ENCODE measurements at regions of chr6 and their contacts with region 1.

Region 1: GRCh38 chr6:41182069-41183034 is 18.6 kb downstream of the TREML2 start:
- DNase-seq: peak in 8 of 9 experiments; percentile 28 to 78 (median 53)
- ATAC-seq: peak; percentile 93
- H3K4me3 ChIP-seq: no peak overlapping the region
- H3K4me3 Mint-ChIP-seq: no peak overlapping the region
- H3K27ac ChIP-seq: no peak overlapping the region
- H3K27ac Mint-ChIP-seq: no peak overlapping the region
- H3K4me1 ChIP-seq: peaks cover 18% of the 10 kb centered on the region
- H3K4me1 Mint-ChIP-seq: peaks cover 20% of the 10 kb centered on the region
- H3K27me3 ChIP-seq: no peaks in the 10 kb centered on the region
- H3K27me3 Mint-ChIP-seq: peaks cover 5% of the 10 kb centered on the region
- CTCF ChIP-seq: peak; percentile 62

Region 2: GRCh38 chr6:41092421-41093140 is 89.8 kb before region 1 on chr6:
- CTCF ChIA-PET with region 1: interaction called, 4 read pairs
- POLR2A ChIA-PET with region 1: no interaction called
- intact Hi-C with region 1: loop called in 1 of 2 experiments (anchors 5 kb)
- DNase-seq: peak in 1 of 9 experiments; percentile 34
- ATAC-seq: no peak
- H3K4me3 ChIP-seq: no peak overlapping the region
- H3K4me3 Mint-ChIP-seq: no peak overlapping the region
- H3K27ac ChIP-seq: no peak overlapping the region
- H3K27ac Mint-ChIP-seq: peak overlapping the region; percentile 18
- H3K4me1 ChIP-seq: no peaks in the 10 kb centered on the region
- H3K4me1 Mint-ChIP-seq: peaks cover 4% of the 10 kb centered on the region
- H3K27me3 ChIP-seq: no peaks in the 10 kb centered on the region
- H3K27me3 Mint-ChIP-seq: no peaks in the 10 kb centered on the region
- CTCF ChIP-seq: no peak

Region 3: DNA sequence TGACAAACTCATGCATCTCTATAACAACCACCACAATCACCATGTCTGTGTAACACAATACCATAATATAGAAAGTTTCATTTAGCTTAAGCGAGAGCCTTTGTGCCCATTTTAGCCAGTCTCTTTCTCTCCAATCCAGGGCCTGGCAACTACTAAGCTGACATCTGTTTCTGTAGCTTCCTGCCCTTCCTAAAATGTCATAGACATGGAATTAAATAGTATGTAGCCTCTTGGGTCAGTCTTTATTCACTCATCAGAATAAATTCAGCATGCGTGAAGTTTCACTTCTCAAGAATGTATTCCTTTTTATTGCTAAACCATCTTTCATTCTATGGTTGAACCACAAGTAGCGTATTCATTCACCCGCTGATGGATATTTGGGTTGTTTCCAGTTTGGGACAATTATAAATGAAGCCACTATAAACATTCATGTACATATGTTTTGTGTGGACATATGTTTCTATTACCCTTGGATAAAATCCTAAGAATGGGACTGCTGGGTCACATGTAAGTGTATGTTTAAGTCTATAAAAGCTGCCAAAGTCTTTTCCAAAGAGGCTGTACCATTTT is 17.7 kb before region 1 on chr6:
- CTCF ChIA-PET with region 1: no interaction called
- POLR2A ChIA-PET with region 1: no interaction called
- intact Hi-C with region 1: no loop called
- DNase-seq: no peak
- ATAC-seq: no peak
- H3K4me3 ChIP-seq: no peak overlapping the region
- H3K4me3 Mint-ChIP-seq: no peak overlapping the region
- H3K27ac ChIP-seq: no peak overlapping the region
- H3K27ac Mint-ChIP-seq: no peak overlapping the region
- H3K4me1 ChIP-seq: no peaks in the 10 kb centered on the region
- H3K4me1 Mint-ChIP-seq: no peaks in the 10 kb centered on the region
- H3K27me3 ChIP-seq: peaks cover 0 to 3% of the 10 kb centered on the region in 2 experiments
- H3K27me3 Mint-ChIP-seq: peaks cover 13% of the 10 kb centered on the region
- CTCF ChIP-seq: no peak

Region 4: DNA sequence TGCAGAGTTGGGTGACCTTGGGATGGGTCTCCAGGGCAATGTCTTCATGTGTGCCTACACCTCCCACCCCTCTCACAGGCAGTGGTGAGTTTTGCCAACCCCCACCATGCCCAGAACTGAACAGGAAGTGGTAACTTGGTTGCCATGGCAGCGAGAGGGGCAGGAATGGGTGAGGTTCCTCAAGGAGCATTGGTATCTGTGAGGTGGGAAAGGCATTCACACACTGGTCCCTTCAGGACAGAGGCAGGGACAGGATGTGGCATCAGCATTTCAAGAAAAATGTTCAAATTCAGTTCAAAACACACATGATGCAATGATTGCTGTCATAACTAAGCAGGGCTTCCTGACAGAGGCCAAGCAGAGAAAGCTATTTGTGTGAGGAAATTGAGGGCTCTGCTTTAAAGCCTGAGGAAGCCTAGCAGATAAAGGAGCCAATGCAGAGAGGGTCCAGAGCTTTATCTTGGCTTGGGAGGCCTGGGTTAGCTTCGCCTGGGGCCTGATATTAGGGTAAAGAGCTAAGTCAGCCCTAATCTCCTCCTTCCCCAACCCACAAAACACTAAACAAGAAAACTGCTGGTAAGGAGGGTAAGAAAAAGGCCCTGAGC is 18.0 kb after region 1 on chr6:
- CTCF ChIA-PET with region 1: interaction called, 18 read pairs
- POLR2A ChIA-PET with region 1: interaction called, 5 read pairs
- intact Hi-C with region 1: no loop called
- DNase-seq: peak; percentile 28 to 85 (median 65)
- ATAC-seq: peak; percentile 76
- H3K4me3 ChIP-seq: peak overlapping the region; percentile 17 to 24
- H3K4me3 Mint-ChIP-seq: peak overlapping the region; percentile 66
- H3K27ac ChIP-seq: peak overlapping the region; percentile 78 to 98
- H3K27ac Mint-ChIP-seq: peak overlapping the region; percentile 93
- H3K4me1 ChIP-seq: peaks cover 52% of the 10 kb centered on the region
- H3K4me1 Mint-ChIP-seq: peaks cover 72% of the 10 kb centered on the region
- H3K27me3 ChIP-seq: no peaks in the 10 kb centered on the region
- H3K27me3 Mint-ChIP-seq: no peaks in the 10 kb centered on the region
- CTCF ChIP-seq: no peak

Region 5: GRCh38 chr6:41214559-41215238 is 32.3 kb after region 1 on chr6:
- CTCF ChIA-PET with region 1: no interaction called
- POLR2A ChIA-PET with region 1: no interaction called
- intact Hi-C with region 1: no loop called
- DNase-seq: no peak
- ATAC-seq: no peak
- H3K4me3 ChIP-seq: no peak overlapping the region
- H3K4me3 Mint-ChIP-seq: no peak overlapping the region
- H3K27ac ChIP-seq: no peak overlapping the region
- H3K27ac Mint-ChIP-seq: no peak overlapping the region
- H3K4me1 ChIP-seq: no peaks in the 10 kb centered on the region
- H3K4me1 Mint-ChIP-seq: peaks cover 4% of the 10 kb centered on the region
- H3K27me3 ChIP-seq: no peaks in the 10 kb centered on the region
- H3K27me3 Mint-ChIP-seq: no peaks in the 10 kb centered on the region
- CTCF ChIP-seq: no peak

Measured in CD8-positive, alpha-beta T cell (primary cell).